Naive thymus-derived CD8-positive, alpha-beta T cell (primary cell): ENCODE measurements at regions of chr1 and their contacts with region 1.

Region 1: GRCh38 chr1:109548321-109549267 is at the start of gene GNAI3:
- DNase-seq: peak; percentile 84 to 98 (median 94)
- ATAC-seq: peak; percentile 90 to 92
- H3K4me3 Mint-ChIP-seq: peak within 1 kb of the TSS; percentile 94 to 100 (median 98)
- H3K27ac Mint-ChIP-seq: peak within 1 kb of the TSS; percentile 95 to 100 (median 99)
- H3K4me1 Mint-ChIP-seq: peaks cover 20 to 66% (median 58%) of the 10 kb centered on the region in 4 donors
- H3K27me3 Mint-ChIP-seq: no peaks in the 10 kb centered on the region
- polyA plus RNA-seq, gene GNAI3: 7.1 to 7.7 (median 7.7) TPM

Region 2: GRCh38 chr1:109213785-109214468 is 334.7 kb before region 1 on chr1 and contains the start of gene SARS1:
- POLR2A ChIA-PET with region 1: interaction called, 10 read pairs
- DNase-seq: peak; percentile 73 to 94 (median 88)
- ATAC-seq: peak; percentile 89
- H3K4me3 Mint-ChIP-seq: peak within 1 kb of the TSS; percentile 93 to 100 (median 99)
- H3K27ac Mint-ChIP-seq: peak within 1 kb of the TSS; percentile 92 to 99 (median 97)
- H3K4me1 Mint-ChIP-seq: peaks cover 24 to 44% (median 38%) of the 10 kb centered on the region in 4 donors
- H3K27me3 Mint-ChIP-seq: peaks cover 0 to 3% (median 0%) of the 10 kb centered on the region in 5 donors
- polyA plus RNA-seq, gene SARS1: 117 to 154 (median 127) TPM

Region 3: GRCh38 chr1:109559995-109560394 is 11.4 kb after region 1 on chr1:
- POLR2A ChIA-PET with region 1: interaction called, 11 read pairs
- DNase-seq: no peak
- ATAC-seq: no peak
- H3K4me3 Mint-ChIP-seq: peak overlapping the region in 4 of 10 donors; percentile 17 to 45 (median 26)
- H3K27ac Mint-ChIP-seq: peak overlapping the region in 7 of 10 donors; percentile 2 to 58 (median 25)
- H3K4me1 Mint-ChIP-seq: peaks cover 27 to 90% (median 87%) of the 10 kb centered on the region in 4 donors
- H3K27me3 Mint-ChIP-seq: no peaks in the 10 kb centered on the region

Region 4: GRCh38 chr1:109620841-109621286 is 72.3 kb after region 1 on chr1:
- POLR2A ChIA-PET with region 1: interaction called, 48 read pairs
- DNase-seq: peak; percentile 91 to 99 (median 95)
- ATAC-seq: peak; percentile 86 to 89
- H3K4me3 Mint-ChIP-seq: peak overlapping the region; percentile 91 to 99 (median 97)
- H3K27ac Mint-ChIP-seq: peak overlapping the region; percentile 84 to 99 (median 98)
- H3K4me1 Mint-ChIP-seq: peaks cover 51 to 92% (median 71%) of the 10 kb centered on the region in 4 donors
- H3K27me3 Mint-ChIP-seq: no peaks in the 10 kb centered on the region

Region 5: GRCh38 chr1:109630081-109630897 is 81.7 kb after region 1 on chr1:
- POLR2A ChIA-PET with region 1: interaction called, 12 read pairs
- DNase-seq: peak in 6 of 10 donors; percentile 36 to 77 (median 44)
- ATAC-seq: peak; percentile 21 to 22
- H3K4me3 Mint-ChIP-seq: no peak overlapping the region
- H3K27ac Mint-ChIP-seq: peak overlapping the region in 2 of 10 donors; percentile 5 to 86
- H3K4me1 Mint-ChIP-seq: peaks cover 13 to 21% (median 15%) of the 10 kb centered on the region in 4 donors
- H3K27me3 Mint-ChIP-seq: no peaks in the 10 kb centered on the region

Region 6: GRCh38 chr1:109773146-109773899 is 224.7 kb after region 1 on chr1:
- POLR2A ChIA-PET with region 1: interaction called, 10 read pairs
- DNase-seq: peak; percentile 43 to 85 (median 67)
- ATAC-seq: peak; percentile 94 to 95
- H3K4me3 Mint-ChIP-seq: no peak overlapping the region
- H3K27ac Mint-ChIP-seq: peak overlapping the region in 2 of 10 donors; percentile 16 to 46
- H3K4me1 Mint-ChIP-seq: peaks cover 4 to 17% (median 8%) of the 10 kb centered on the region in 4 donors
- H3K27me3 Mint-ChIP-seq: peaks cover 0 to 23% (median 1%) of the 10 kb centered on the region in 5 donors

Region 7: DNA sequence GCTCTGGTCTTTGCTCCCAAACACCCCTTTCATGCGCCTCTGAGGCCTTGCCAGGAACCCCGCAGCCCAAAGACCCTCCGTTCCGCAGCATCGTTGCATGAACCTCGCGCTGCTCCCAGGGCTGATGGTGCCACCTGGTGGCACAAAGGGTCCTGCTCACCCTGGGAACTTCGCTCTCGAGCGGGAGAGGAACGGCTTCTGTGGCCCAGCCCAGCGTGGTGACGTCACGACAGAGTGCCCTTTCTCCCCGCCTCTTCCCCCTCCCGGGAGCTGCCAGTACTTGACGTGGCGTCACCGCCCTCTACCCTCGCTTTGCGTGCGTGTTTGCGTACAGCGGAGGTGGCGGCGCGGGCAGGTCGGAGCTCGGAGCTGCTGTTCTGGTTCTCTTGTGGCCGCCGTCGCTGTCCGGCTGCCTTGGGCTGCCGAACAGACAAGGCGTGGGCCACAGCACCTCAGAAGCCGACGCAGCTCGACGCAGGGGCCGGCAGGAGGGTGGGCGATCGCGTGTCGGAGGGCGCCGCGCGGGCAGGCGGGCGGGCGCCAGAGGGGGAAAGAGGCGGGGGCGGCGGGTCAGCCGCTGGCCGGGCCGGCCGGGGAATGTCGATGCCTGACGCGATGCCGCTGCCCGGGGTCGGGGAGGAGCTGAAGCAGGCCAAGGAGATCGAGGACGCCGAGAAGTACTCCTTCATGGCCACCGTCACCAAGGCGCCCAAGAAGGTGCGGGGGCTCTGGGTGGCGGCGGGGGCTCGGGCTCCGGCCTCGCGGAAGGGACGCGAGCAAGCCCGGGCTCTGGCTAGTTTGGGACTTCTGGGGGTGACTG is 436.1 kb after region 1 on chr1 and contains the start of gene AHCYL1:
- POLR2A ChIA-PET with region 1: interaction called, 23 read pairs
- DNase-seq: peak; percentile 96 to 99 (median 99)
- ATAC-seq: peak; percentile 96 to 99
- H3K4me3 Mint-ChIP-seq: peak within 1 kb of the TSS; percentile 96 to 99 (median 98)
- H3K27ac Mint-ChIP-seq: peak within 1 kb of the TSS; percentile 91 to 100 (median 98)
- H3K4me1 Mint-ChIP-seq: peaks cover 22 to 50% (median 45%) of the 10 kb centered on the region in 4 donors
- H3K27me3 Mint-ChIP-seq: peaks cover 0 to 1% (median 0%) of the 10 kb centered on the region in 5 donors
- polyA plus RNA-seq, gene AHCYL1: 36.8 to 38.6 (median 38.1) TPM